Activated naive CD8-positive, alpha-beta T cell treated with anti-CD3 and anti-CD28 coated beads, Interleukin-2, amount 10 ng/mL, durations not matched to agents 7 days and 5 days (primary cell): ENCODE measurements at regions of chr1 and their contacts with region 1.

Region 1: GRCh38 chr1:154176337-154176736 is 15.6 kb downstream of the TPM3 start:
- DNase-seq: no peak
- ATAC-seq: no peak
- H3K4me3 Mint-ChIP-seq: peak overlapping the region; percentile 56
- H3K27ac Mint-ChIP-seq: peak overlapping the region; percentile 75
- H3K4me1 Mint-ChIP-seq: peaks cover 56% of the 10 kb centered on the region
- H3K27me3 Mint-ChIP-seq: no peaks in the 10 kb centered on the region

Region 2: DNA sequence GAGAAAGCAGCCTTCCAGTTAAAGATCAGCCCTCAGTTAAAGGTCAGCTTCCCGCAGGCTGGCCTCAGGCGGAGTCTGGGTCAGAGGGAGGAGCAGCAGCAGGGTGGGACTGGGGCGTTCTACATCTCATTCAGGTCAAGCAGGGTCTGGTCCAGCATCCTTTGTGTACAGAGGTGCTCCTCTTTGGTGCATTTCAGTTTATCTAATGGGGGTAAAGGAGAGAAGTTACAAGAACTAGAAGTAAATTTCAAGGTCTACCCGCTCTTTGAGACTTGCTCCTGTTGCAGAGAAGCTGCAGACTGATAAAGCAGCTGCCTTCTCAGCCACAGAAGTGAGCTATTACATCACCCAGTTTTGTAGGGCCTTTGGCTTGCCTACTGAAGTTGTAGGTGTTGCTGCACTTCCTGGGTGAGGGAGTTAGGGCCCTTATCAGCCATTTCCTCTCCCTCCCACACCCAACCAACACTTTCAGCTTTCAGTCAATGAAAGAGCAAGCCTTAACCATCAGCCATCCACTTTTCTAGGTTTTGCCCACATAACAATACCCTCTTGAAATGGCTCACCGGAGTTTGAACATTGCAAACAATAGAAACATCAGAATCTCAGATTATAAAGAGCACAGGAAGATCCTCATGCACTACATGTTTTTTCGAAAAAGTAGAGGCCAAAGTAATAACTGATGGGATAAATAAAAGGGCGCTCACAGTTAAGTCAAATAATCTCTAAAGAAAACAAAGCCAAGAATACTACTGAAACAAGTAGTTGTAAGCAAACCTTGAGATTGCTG is 18.6 kb before region 1 on chr1:
- POLR2A ChIA-PET with region 1: interaction called, 70 read pairs
- DNase-seq: peak; percentile 48
- ATAC-seq: peak; percentile 98
- H3K4me3 Mint-ChIP-seq: peak overlapping the region; percentile 77
- H3K27ac Mint-ChIP-seq: peak overlapping the region; percentile 93
- H3K4me1 Mint-ChIP-seq: peaks cover 51% of the 10 kb centered on the region
- H3K27me3 Mint-ChIP-seq: no peaks in the 10 kb centered on the region

Region 3: GRCh38 chr1:154206196-154206595 is 29.9 kb after region 1 on chr1 and contains the start of gene CFAP141:
- POLR2A ChIA-PET with region 1: no interaction called
- DNase-seq: no peak
- ATAC-seq: peak; percentile 40
- H3K4me3 Mint-ChIP-seq: no peak within 1 kb of the TSS
- H3K27ac Mint-ChIP-seq: peak within 1 kb of the TSS; percentile 40
- H3K4me1 Mint-ChIP-seq: peaks cover 7% of the 10 kb centered on the region
- H3K27me3 Mint-ChIP-seq: no peaks in the 10 kb centered on the region
- total RNA-seq, gene CFAP141: not detected